ENCODE measurements at regions of chr5 and their contacts with region 1.

Region 1: GRCh38 chr5:176739461-176740051 is 70.8 kb upstream of the UNC5A start:
- DNase-seq: no peak
- H3K4me3 ChIP-seq: no peak overlapping the region
- H3K27ac ChIP-seq: no peak overlapping the region
- H3K4me1 ChIP-seq: peaks cover 3% of the 10 kb centered on the region
- H3K27me3 ChIP-seq: peaks cover 21% of the 10 kb centered on the region
- CTCF ChIP-seq: no peak

Region 2: DNA sequence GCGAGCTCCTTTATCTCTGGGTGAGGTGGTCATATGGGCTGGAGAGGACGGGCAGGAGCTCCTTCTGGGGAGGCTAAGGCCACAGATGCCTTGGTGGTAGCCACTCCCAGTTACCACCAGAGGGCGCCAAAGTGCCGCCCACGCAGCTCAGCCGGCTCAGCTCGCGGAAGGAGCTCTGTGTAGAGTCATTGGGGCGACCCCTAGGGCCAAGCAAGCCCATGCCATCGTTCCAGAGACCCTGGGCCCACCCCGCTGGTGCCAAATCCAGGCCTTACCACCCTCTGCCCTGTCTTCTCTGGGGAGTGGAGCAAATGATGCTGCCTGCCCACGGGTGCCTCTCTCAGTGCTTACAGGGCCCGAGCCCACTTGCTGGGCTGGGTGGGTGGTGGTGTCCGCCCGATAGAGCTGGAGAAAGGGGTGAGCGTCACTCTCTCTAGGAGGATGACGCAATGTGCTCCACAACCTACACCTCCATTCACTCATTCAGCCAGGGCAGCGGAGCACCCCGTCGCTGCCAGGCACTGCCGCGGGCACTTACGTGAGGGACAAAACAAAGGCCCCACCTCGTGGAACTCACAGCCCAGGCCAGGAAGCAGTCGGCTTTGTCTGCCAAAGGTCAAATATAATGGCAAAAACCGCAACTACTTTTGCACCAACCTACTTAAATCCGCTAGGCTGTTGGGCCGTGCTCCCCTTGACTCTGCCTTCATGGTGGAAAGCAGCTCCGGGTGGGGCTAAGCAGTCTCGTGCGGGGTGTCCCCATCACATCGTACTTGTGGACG is 78.5 kb before region 1 on chr5:
- CTCF ChIA-PET with region 1: no interaction called
- dilution Hi-C with region 1: no loop called
- in situ Hi-C with region 1: no loop called
- intact Hi-C with region 1: no loop called
- DNase-seq: peak; percentile 49
- H3K4me3 ChIP-seq: no peak overlapping the region
- H3K27ac ChIP-seq: no peak overlapping the region
- H3K4me1 ChIP-seq: no peaks in the 10 kb centered on the region
- H3K27me3 ChIP-seq: no peaks in the 10 kb centered on the region
- CTCF ChIP-seq: peak; percentile 77 to 98

Region 3: GRCh38 chr5:176697934-176698538 is 41.5 kb before region 1 on chr5:
- CTCF ChIA-PET with region 1: no interaction called
- dilution Hi-C with region 1: loop called (anchors 5 kb)
- in situ Hi-C with region 1: no loop called
- intact Hi-C with region 1: no loop called
- DNase-seq: no peak
- H3K4me3 ChIP-seq: no peak overlapping the region
- H3K27ac ChIP-seq: no peak overlapping the region
- H3K4me1 ChIP-seq: no peaks in the 10 kb centered on the region
- H3K27me3 ChIP-seq: peaks cover 4% of the 10 kb centered on the region
- CTCF ChIP-seq: no peak

Region 4: DNA sequence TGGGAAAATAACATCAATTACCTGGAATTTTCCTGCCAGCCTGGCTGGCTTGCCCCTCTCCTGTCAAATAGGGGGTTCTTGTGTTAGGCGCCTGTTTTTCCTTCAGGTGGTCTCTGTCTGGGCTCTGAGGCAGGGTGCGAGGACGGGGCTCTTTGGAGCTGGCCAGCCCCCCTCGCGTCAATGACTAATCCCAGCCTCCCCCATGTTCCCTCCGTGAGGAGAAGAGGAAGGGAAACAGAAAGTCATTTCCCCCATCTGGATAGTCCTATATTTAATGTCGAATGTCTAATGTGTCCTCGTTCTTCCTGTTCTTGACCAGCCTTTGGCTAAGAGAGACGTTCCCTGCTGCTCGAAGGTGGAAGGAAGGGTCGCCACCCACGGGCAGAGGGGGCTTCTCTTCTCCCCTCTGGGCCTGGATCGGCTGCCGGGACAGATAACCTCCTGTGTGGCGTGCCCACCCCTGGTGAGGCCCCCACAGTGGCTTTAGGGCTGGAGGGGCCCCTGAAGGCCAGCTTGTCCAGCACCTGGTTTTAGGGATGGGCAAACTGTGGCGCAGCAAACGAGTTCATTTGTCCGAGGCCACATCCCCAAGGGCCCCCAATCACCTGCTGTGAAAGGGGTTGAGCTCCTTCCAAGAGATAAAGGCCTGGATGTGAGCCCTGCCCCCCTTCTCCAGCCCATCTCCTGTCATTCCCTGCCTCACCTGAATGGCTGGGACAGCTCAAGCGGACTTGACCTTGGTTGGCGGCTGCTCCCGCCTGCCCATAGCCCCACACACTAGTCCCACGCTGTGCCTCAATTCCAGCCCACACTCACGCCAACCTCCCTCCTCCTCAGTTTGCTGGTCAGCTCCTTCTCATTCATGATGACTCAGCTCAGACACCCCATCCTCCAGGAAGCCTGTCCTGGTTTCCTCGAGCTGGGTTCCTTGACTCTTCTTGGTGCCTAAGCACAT is 34.9 kb after region 1 on chr5:
- CTCF ChIA-PET with region 1: no interaction called
- dilution Hi-C with region 1: loop called (anchors 5 kb)
- in situ Hi-C with region 1: no loop called
- intact Hi-C with region 1: no loop called
- DNase-seq: no peak
- H3K4me3 ChIP-seq: no peak overlapping the region
- H3K27ac ChIP-seq: no peak overlapping the region
- H3K4me1 ChIP-seq: no peaks in the 10 kb centered on the region
- H3K27me3 ChIP-seq: no peaks in the 10 kb centered on the region
- CTCF ChIP-seq: no peak